HepG2 (cell line): ENCODE measurements at regions of chr10 and their contacts with region 1.

Region 1: GRCh38 chr10:28302638-28303488 is at the start of gene MPP7:
- DNase-seq: peak; percentile 98
- ATAC-seq: peak; percentile 96
- H3K4me3 ChIP-seq: peak within 1 kb of the TSS; percentile 72 to 85 (median 81)
- H3K27ac ChIP-seq: peak within 1 kb of the TSS; percentile 90
- H3K4me1 ChIP-seq: peaks cover 45% of the 10 kb centered on the region
- H3K27me3 ChIP-seq: no peaks in the 10 kb centered on the region
- CTCF ChIP-seq: peak; percentile 55; the same call in 1 of the 2 replicates
- EP300 ChIP-seq: no peak
- POLR2A ChIP-seq: peak; percentile 70 to 73
- RAD21 ChIP-seq: peak; percentile 92
- total RNA-seq, gene MPP7: 16.4 and 23.8 TPM in 2 replicates

Region 2: DNA sequence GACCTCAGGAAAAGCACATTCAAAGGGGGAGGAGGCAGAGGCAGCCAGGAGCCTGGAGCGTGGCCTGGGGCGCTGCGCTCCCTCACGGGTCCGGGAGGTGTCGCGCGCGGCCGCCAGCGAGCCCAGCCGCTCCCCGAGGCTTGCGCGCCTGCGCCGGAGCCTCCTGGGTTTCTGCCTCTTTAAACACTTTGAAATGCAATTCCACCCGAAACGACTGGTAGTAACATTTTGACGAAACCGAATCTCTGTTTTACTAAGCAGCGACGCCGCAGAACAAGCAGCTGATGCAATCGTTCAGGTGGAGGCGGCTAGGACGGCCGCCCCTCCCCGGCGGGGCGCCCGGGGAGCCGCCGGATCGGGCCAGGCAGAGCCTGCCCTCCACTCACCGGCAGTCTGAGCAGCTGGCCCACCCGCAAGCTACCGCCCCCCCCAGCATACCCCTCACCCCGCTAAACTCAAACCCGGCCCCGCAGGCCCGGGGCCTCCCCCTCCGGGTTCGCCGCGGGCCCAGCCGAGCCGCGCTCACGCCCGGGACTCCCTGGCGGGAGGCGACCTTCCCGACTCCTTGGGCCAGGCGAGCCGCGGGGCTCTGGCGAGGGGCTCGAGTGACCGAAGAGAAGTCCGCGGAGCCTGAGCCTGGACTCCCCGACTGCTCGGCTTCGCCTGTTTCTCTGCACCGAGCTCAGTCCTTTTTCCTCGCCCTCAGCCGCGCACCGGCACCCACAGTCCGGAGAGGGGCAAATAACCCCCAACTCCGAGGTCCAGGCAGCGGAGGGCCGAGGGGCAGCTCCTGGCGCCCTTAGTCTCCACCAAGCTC is 560.5 kb before region 1 on chr10:
- CTCF ChIA-PET with region 1: no interaction called
- POLR2A ChIA-PET with region 1: no interaction called
- in situ Hi-C with region 1: no loop called
- intact Hi-C with region 1: loop called (anchors 5 kb)
- DNase-seq: peak; percentile 41
- ATAC-seq: peak; percentile 93
- H3K4me3 ChIP-seq: peak overlapping the region; percentile 61 to 79 (median 75)
- H3K27ac ChIP-seq: no peak overlapping the region
- H3K4me1 ChIP-seq: peaks cover 20% of the 10 kb centered on the region
- H3K27me3 ChIP-seq: peaks cover 8 to 36% of the 10 kb centered on the region in 2 experiments
- CTCF ChIP-seq: peak; percentile 80
- EP300 ChIP-seq: no peak
- POLR2A ChIP-seq: no peak
- RAD21 ChIP-seq: peak; percentile 85

Region 3: GRCh38 chr10:28020080-28020860 is 282.6 kb before region 1 on chr10:
- CTCF ChIA-PET with region 1: no interaction called
- POLR2A ChIA-PET with region 1: no interaction called
- in situ Hi-C with region 1: no loop called
- intact Hi-C with region 1: no loop called
- DNase-seq: no peak
- ATAC-seq: no peak
- H3K4me3 ChIP-seq: no peak overlapping the region
- H3K27ac ChIP-seq: no peak overlapping the region
- H3K4me1 ChIP-seq: no peaks in the 10 kb centered on the region
- H3K27me3 ChIP-seq: peaks cover 0 to 3% of the 10 kb centered on the region in 2 experiments; a peak in 1 of 5 replicates
- CTCF ChIP-seq: no peak
- EP300 ChIP-seq: no peak
- POLR2A ChIP-seq: no peak
- RAD21 ChIP-seq: no peak

Region 4: GRCh38 chr10:28250782-28251181 is 52.1 kb before region 1 on chr10:
- CTCF ChIA-PET with region 1: no interaction called
- POLR2A ChIA-PET with region 1: no interaction called
- in situ Hi-C with region 1: no loop called
- intact Hi-C with region 1: loop called (anchors 2 kb)
- DNase-seq: peak; percentile 29
- ATAC-seq: no peak
- H3K4me3 ChIP-seq: no peak overlapping the region
- H3K27ac ChIP-seq: no peak overlapping the region
- H3K4me1 ChIP-seq: no peaks in the 10 kb centered on the region
- H3K27me3 ChIP-seq: no peaks in the 10 kb centered on the region
- CTCF ChIP-seq: peak; percentile 49
- EP300 ChIP-seq: no peak
- POLR2A ChIP-seq: no peak
- RAD21 ChIP-seq: peak; percentile 51

Region 5: GRCh38 chr10:28367929-28368484 is 65.1 kb after region 1 on chr10:
- CTCF ChIA-PET with region 1: no interaction called
- POLR2A ChIA-PET with region 1: interaction called, 7 read pairs
- in situ Hi-C with region 1: loop called (anchors 10 kb)
- intact Hi-C with region 1: no loop called
- DNase-seq: no peak
- ATAC-seq: no peak
- H3K4me3 ChIP-seq: no peak overlapping the region
- H3K27ac ChIP-seq: no peak overlapping the region
- H3K4me1 ChIP-seq: peaks cover 55% of the 10 kb centered on the region
- H3K27me3 ChIP-seq: no peaks in the 10 kb centered on the region
- CTCF ChIP-seq: no peak
- EP300 ChIP-seq: no peak
- POLR2A ChIP-seq: no peak
- RAD21 ChIP-seq: no peak